WTC11 (cell line): ENCODE measurements at regions of chr16 and their contacts with region 1.

Region 1: GRCh38 chr16:74998481-74999218 is at the start of gene ZNRF1:
- DNase-seq: peak; percentile 91
- ATAC-seq: peak; percentile 74
- H3K4me3 Mint-ChIP-seq: peak within 1 kb of the TSS; percentile 85
- H3K27ac Mint-ChIP-seq: peak within 1 kb of the TSS; percentile 59
- H3K4me1 Mint-ChIP-seq: peaks cover 45% of the 10 kb centered on the region
- H3K27me3 Mint-ChIP-seq: peaks cover 5% of the 10 kb centered on the region
- CTCF ChIP-seq: peak; percentile 51; the same call in 1 of the 2 replicates
- total RNA-seq, gene ZNRF1: 44.3 to 47.6 TPM (median 46.5 TPM) in 3 replicates

Region 2: GRCh38 chr16:74695450-74696422 is 302.9 kb before region 1 on chr16:
- CTCF ChIA-PET with region 1: no interaction called
- POLR2A ChIA-PET with region 1: no interaction called
- DNase-seq: peak; percentile 72
- ATAC-seq: peak; percentile 95
- H3K4me3 Mint-ChIP-seq: peak overlapping the region; percentile 76
- H3K27ac Mint-ChIP-seq: no peak overlapping the region
- H3K4me1 Mint-ChIP-seq: peaks cover 13% of the 10 kb centered on the region
- H3K27me3 Mint-ChIP-seq: peaks cover 23% of the 10 kb centered on the region
- CTCF ChIP-seq: no peak

Region 3: GRCh38 chr16:74984535-74985296 is 13.9 kb before region 1 on chr16 and contains the start of gene WDR59:
- CTCF ChIA-PET with region 1: interaction called, 39 read pairs
- POLR2A ChIA-PET with region 1: interaction called, 4 read pairs
- DNase-seq: peak; percentile 100
- ATAC-seq: peak; percentile 99
- H3K4me3 Mint-ChIP-seq: peak within 1 kb of the TSS; percentile 85
- H3K27ac Mint-ChIP-seq: peak within 1 kb of the TSS; percentile 80
- H3K4me1 Mint-ChIP-seq: peaks cover 7% of the 10 kb centered on the region
- H3K27me3 Mint-ChIP-seq: no peaks in the 10 kb centered on the region
- CTCF ChIP-seq: no peak
- total RNA-seq, gene WDR59: 100 to 111 TPM (median 102 TPM) in 3 replicates

Region 4: GRCh38 chr16:75011634-75012307 is 13.1 kb after region 1 on chr16:
- CTCF ChIA-PET with region 1: interaction called, 14 read pairs
- POLR2A ChIA-PET with region 1: interaction called, 4 read pairs
- DNase-seq: no peak
- ATAC-seq: no peak
- H3K4me3 Mint-ChIP-seq: no peak overlapping the region
- H3K27ac Mint-ChIP-seq: no peak overlapping the region; the same call in 1 of the 2 replicates
- H3K4me1 Mint-ChIP-seq: peaks cover 27% of the 10 kb centered on the region
- H3K27me3 Mint-ChIP-seq: no peaks in the 10 kb centered on the region
- CTCF ChIP-seq: no peak

Region 5: DNA sequence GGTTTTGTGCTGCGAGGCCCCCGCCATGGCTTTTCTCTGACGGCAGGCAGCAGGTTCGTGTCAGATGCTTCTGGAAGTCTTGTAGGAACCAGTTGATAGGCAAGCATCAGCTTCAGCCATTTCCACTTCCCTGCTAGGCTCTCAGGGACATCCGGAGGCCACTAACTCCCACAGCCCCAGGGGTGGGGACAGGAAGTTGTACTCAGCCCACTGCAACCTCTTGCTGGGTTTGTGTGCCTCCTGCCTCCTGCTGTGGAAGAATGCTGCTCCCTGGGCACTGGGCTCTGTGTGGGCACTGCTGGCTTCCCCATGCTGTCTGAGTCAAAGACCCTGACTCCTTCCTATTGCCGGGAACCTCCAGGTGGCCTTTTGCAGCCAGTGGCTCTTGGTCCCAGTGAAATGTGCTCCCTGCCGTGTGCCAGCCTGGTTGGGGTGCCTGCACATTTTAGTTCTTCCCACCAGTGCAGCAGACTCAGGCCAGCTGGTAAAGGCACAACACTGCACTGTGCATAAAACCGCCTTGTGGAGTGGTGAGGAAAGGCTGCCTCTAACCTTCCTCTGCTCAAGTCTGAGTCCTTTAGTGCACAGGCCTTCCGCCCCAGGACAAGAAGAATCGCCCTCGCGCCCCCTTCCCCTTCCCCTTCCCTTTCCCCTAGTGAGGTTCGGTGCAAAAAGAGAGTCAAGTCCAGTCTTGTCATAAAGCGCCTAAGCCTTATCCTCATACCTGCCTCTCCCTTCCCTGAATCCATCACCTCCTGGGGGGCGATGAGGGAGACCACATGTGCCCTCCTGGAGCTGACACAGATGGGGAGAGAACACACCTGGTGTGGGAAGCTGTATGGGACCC is 101.3 kb after region 1 on chr16:
- CTCF ChIA-PET with region 1: interaction called, 40 read pairs
- POLR2A ChIA-PET with region 1: no interaction called
- DNase-seq: no peak
- ATAC-seq: peak; percentile 8
- H3K4me3 Mint-ChIP-seq: no peak overlapping the region
- H3K27ac Mint-ChIP-seq: peak overlapping the region; percentile 81
- H3K4me1 Mint-ChIP-seq: peaks cover 60% of the 10 kb centered on the region
- H3K27me3 Mint-ChIP-seq: no peaks in the 10 kb centered on the region
- CTCF ChIP-seq: no peak

Region 6: DNA sequence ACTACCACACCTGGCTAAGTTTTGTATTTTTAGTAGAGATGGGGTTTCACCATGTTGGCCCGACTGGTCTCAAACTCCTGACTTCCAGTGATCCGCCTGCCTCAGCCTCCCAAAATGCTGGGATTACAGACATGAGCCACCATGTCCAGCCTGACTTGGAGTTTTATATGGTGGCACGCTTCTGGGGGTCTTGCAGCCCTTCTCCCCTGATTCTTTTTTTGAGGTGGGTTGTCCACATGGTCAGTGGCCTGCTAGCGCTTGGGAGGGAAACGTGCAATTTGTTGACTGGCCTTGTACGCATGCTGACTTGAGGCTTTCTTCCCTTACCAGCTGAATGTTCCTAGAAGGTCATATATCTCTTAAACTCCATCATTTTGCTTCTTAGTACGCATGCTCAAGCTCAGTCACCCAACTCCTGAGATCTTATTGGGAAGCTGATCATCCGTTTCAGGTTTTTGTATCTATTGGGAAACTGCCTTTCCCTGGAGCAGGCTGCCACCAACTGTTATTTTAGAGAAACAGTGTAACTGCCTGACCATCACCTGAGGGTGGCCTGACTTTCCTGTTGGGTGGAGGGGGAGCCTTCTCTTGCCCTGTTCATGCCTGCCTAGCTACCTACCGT is 131.6 kb after region 1 on chr16:
- CTCF ChIA-PET with region 1: interaction called, 18 read pairs
- POLR2A ChIA-PET with region 1: no interaction called
- DNase-seq: no peak
- ATAC-seq: peak; percentile 95
- H3K4me3 Mint-ChIP-seq: no peak overlapping the region
- H3K27ac Mint-ChIP-seq: no peak overlapping the region
- H3K4me1 Mint-ChIP-seq: peaks cover 13% of the 10 kb centered on the region
- H3K27me3 Mint-ChIP-seq: no peaks in the 10 kb centered on the region; the same call in 1 of the 2 replicates
- CTCF ChIP-seq: no peak